ENCODE measurements at regions of chr10 and their contacts with region 1.

Region 1: GRCh38 chr10:8059959-8060703 is 5.6 kb downstream of the GATA3 start:
- DNase-seq: peak; percentile 75
- H3K4me3 Mint-ChIP-seq: peak overlapping the region; percentile 54
- H3K27ac Mint-ChIP-seq: peak overlapping the region; percentile 62
- H3K4me1 Mint-ChIP-seq: peaks cover 81% of the 10 kb centered on the region
- H3K27me3 Mint-ChIP-seq: no peaks in the 10 kb centered on the region

Region 2: GRCh38 chr10:8183241-8183704 is 123.1 kb after region 1 on chr10:
- CTCF ChIA-PET with region 1: no interaction called
- intact Hi-C with region 1: loop called (anchors 2 kb)
- DNase-seq: peak; percentile 51
- H3K4me3 Mint-ChIP-seq: no peak overlapping the region
- H3K27ac Mint-ChIP-seq: peak overlapping the region; percentile 21
- H3K4me1 Mint-ChIP-seq: peaks cover 16% of the 10 kb centered on the region
- H3K27me3 Mint-ChIP-seq: no peaks in the 10 kb centered on the region

Region 3: GRCh38 chr10:8245131-8245813 is 185.1 kb after region 1 on chr10:
- CTCF ChIA-PET with region 1: no interaction called
- intact Hi-C with region 1: loop called (anchors 2 kb)
- DNase-seq: peak; percentile 30
- H3K4me3 Mint-ChIP-seq: no peak overlapping the region
- H3K27ac Mint-ChIP-seq: peak overlapping the region; percentile 37
- H3K4me1 Mint-ChIP-seq: peaks cover 38% of the 10 kb centered on the region
- H3K27me3 Mint-ChIP-seq: no peaks in the 10 kb centered on the region

Measured in activated naive CD4-positive, alpha-beta T cell treated with anti-CD3 and anti-CD28 coated beads for 36 hours (primary cell).